Endothelial cell of umbilical vein (primary cell): ENCODE measurements at regions of chr10 and their contacts with region 1.

Region 1: GRCh38 chr10:101467286-101467770 is 113.4 kb downstream of the BTRC start:
- DNase-seq: peak; percentile 84
- H3K4me3 ChIP-seq: no peak overlapping the region
- H3K27ac ChIP-seq: no peak overlapping the region
- H3K4me1 ChIP-seq: no peaks in the 10 kb centered on the region
- H3K27me3 ChIP-seq: no peaks in the 10 kb centered on the region
- CTCF ChIP-seq: peak; percentile 67 to 75
- POLR2A ChIP-seq: no peak

Region 2: GRCh38 chr10:101214446-101215396 is 252.6 kb before region 1 on chr10:
- CTCF ChIA-PET with region 1: interaction called, 46 read pairs
- POLR2A ChIA-PET with region 1: no interaction called
- dilution Hi-C with region 1: no loop called
- intact Hi-C with region 1: loop called (anchors 1 kb)
- DNase-seq: peak; percentile 44
- H3K4me3 ChIP-seq: no peak overlapping the region
- H3K27ac ChIP-seq: no peak overlapping the region
- H3K4me1 ChIP-seq: no peaks in the 10 kb centered on the region
- H3K27me3 ChIP-seq: peaks cover 68 to 71% of the 10 kb centered on the region in 2 experiments
- CTCF ChIP-seq: peak; percentile 85 to 94
- POLR2A ChIP-seq: no peak

Region 3: DNA sequence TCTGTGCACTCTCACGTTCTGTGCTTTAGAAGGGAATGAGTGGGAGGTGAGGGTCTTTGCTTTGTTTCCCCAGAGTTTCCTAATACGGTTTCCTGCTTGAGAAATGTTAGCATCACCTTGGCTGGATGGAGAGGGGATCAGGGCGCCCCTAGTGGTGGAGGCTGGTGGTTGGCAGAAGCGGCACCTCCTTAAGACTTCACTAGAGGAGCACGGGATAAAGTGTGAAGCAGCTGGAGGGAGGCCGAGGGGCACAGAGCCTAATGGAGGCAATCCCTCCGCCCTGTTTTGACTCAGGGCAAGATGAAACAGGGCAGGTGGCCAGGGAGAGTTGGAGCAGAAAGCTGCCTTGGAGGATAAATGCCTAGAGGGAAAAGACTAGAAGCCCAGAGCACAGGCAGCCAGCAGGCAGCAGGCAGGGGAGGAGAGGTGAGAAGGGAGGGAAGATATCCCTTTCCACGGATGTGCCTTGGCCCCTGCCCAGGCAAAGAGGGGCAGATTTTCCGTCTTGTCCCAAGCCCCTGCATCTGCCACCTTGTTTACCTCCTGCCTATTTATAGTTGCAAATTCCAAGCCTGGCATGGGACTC is 169.3 kb before region 1 on chr10:
- CTCF ChIA-PET with region 1: interaction called, 156 read pairs
- POLR2A ChIA-PET with region 1: no interaction called
- dilution Hi-C with region 1: no loop called
- intact Hi-C with region 1: loop called (anchors 1 kb)
- DNase-seq: peak; percentile 65
- H3K4me3 ChIP-seq: no peak overlapping the region
- H3K27ac ChIP-seq: no peak overlapping the region
- H3K4me1 ChIP-seq: no peaks in the 10 kb centered on the region
- H3K27me3 ChIP-seq: peaks cover 17 to 37% of the 10 kb centered on the region in 2 experiments
- CTCF ChIP-seq: peak; percentile 91 to 92
- POLR2A ChIP-seq: no peak

Region 4: DNA sequence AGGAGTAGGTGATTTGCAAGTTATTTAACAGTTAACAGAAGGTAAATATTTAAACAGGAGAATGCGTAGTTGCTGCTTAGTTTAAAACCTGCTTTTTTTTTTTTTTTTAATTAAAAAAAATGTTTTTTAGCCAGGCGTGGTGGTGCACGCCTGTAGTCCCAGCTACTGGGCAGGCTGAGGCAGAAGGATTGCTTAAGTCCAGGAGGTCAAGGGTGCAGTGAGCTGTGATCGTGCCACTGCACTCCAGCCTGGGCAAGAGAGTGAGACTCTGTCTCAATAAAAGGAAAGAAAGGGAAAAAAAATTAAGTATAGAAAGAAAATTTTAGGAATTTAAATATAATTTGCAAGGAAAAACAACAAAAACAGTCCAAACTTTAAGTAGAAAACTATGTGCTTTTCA is 41.8 kb before region 1 on chr10:
- CTCF ChIA-PET with region 1: interaction called, 11 read pairs
- POLR2A ChIA-PET with region 1: no interaction called
- dilution Hi-C with region 1: no loop called
- intact Hi-C with region 1: no loop called
- DNase-seq: no peak
- H3K4me3 ChIP-seq: no peak overlapping the region
- H3K27ac ChIP-seq: no peak overlapping the region
- H3K4me1 ChIP-seq: no peaks in the 10 kb centered on the region
- H3K27me3 ChIP-seq: no peaks in the 10 kb centered on the region
- CTCF ChIP-seq: no peak
- POLR2A ChIP-seq: no peak

Region 5: GRCh38 chr10:101478956-101479355 is 11.6 kb after region 1 on chr10:
- CTCF ChIA-PET with region 1: interaction called, 56 read pairs
- POLR2A ChIA-PET with region 1: interaction called, 6 read pairs
- dilution Hi-C with region 1: no loop called
- intact Hi-C with region 1: no loop called
- DNase-seq: no peak
- H3K4me3 ChIP-seq: no peak overlapping the region
- H3K27ac ChIP-seq: no peak overlapping the region
- H3K4me1 ChIP-seq: no peaks in the 10 kb centered on the region
- H3K27me3 ChIP-seq: no peaks in the 10 kb centered on the region
- CTCF ChIP-seq: no peak
- POLR2A ChIP-seq: no peak

Region 6: GRCh38 chr10:101506829-101507661 is 39.7 kb after region 1 on chr10:
- CTCF ChIA-PET with region 1: interaction called, 19 read pairs
- POLR2A ChIA-PET with region 1: no interaction called
- dilution Hi-C with region 1: no loop called
- intact Hi-C with region 1: no loop called
- DNase-seq: no peak
- H3K4me3 ChIP-seq: no peak overlapping the region
- H3K27ac ChIP-seq: no peak overlapping the region
- H3K4me1 ChIP-seq: no peaks in the 10 kb centered on the region
- H3K27me3 ChIP-seq: no peaks in the 10 kb centered on the region
- CTCF ChIP-seq: no peak
- POLR2A ChIP-seq: no peak

Region 7: GRCh38 chr10:101569838-101570766 is 102.8 kb after region 1 on chr10:
- CTCF ChIA-PET with region 1: interaction called, 32 read pairs
- POLR2A ChIA-PET with region 1: no interaction called
- dilution Hi-C with region 1: no loop called
- intact Hi-C with region 1: no loop called
- DNase-seq: peak; percentile 62
- H3K4me3 ChIP-seq: peak overlapping the region in 2 of 3 experiments; percentile 18 to 39
- H3K27ac ChIP-seq: no peak overlapping the region
- H3K4me1 ChIP-seq: peaks cover 7% of the 10 kb centered on the region
- H3K27me3 ChIP-seq: peaks cover 26 to 27% of the 10 kb centered on the region in 2 experiments
- CTCF ChIP-seq: peak; percentile 46 to 90
- POLR2A ChIP-seq: no peak

Region 8: DNA sequence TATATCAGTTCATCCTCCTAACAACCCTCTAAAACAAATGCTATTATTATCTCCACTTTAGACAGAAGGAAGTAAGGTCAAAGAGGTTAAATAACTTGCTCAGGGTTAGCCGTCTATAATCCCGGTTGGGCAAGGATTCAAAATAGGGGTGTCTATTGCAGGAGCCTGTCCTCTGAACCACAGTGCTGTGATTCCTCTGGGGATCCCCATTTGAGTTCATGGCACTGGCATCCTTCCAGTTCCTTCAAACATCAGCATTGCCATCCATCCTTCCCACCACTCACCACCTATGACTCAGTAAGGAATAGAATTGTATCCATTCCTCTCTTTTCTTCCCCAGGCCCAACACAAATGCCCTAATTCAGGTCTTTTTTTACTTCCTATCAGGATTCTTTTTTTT is 623.4 kb after region 1 on chr10:
- CTCF ChIA-PET with region 1: no interaction called
- POLR2A ChIA-PET with region 1: no interaction called
- dilution Hi-C with region 1: no loop called
- intact Hi-C with region 1: no loop called
- DNase-seq: peak; percentile 23
- H3K4me3 ChIP-seq: no peak overlapping the region
- H3K27ac ChIP-seq: no peak overlapping the region
- H3K4me1 ChIP-seq: peaks cover 3% of the 10 kb centered on the region
- H3K27me3 ChIP-seq: no peaks in the 10 kb centered on the region
- CTCF ChIP-seq: no peak
- POLR2A ChIP-seq: no peak